Breast epithelium (tissue), 4 donors: ENCODE measurements at regions of chr13 and their contacts with region 1.

Region 1: DNA sequence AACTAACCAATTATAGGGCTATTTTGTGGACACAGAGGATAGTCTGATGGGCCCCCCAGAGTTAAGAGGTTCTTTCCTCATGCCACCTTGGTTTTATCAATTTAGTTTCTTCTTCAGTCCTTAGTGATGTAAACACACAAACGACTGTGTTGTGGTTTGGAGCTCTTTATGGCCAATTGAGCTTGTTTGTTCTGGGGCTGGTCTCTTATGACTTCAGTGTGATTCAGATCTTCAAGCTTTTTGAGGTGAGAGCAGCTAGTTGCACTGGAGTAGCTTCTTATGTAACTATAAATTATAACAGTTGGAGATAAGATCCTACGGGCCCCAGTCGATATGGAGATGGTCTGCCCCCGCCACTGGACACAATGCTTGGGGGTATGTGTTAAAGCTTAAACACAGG is 22.0 kb upstream of the GJB6 start:
- DNase-seq: no peak
- H3K4me3 ChIP-seq: no peak overlapping the region
- H3K27ac ChIP-seq: no peak overlapping the region
- H3K4me1 ChIP-seq: no peaks in the 10 kb centered on the region
- H3K27me3 ChIP-seq: peaks cover 0 to 8% of the 10 kb centered on the region in 2 donors
- CTCF ChIP-seq: no peak
- POLR2A ChIP-seq: no peak

Region 2: GRCh38 chr13:20274439-20274838 is 20.4 kb after region 1 on chr13:
- intact Hi-C with region 1: no loop called
- DNase-seq: peak in 1 of 2 donors; percentile 40
- H3K4me3 ChIP-seq: no peak overlapping the region
- H3K27ac ChIP-seq: no peak overlapping the region
- H3K4me1 ChIP-seq: no peaks in the 10 kb centered on the region
- H3K27me3 ChIP-seq: no peaks in the 10 kb centered on the region
- CTCF ChIP-seq: no peak
- POLR2A ChIP-seq: no peak

Region 3: GRCh38 chr13:20525690-20526544 is 271.8 kb after region 1 on chr13 and contains the start of gene CRYL1:
- intact Hi-C with region 1: no loop called
- DNase-seq: peak in 1 of 2 donors; percentile 46
- H3K4me3 ChIP-seq: peak within 1 kb of the TSS; percentile 81 to 88 (median 84)
- H3K27ac ChIP-seq: peak within 1 kb of the TSS; percentile 79 to 87
- H3K4me1 ChIP-seq: no peaks in the 10 kb centered on the region
- H3K27me3 ChIP-seq: no peaks in the 10 kb centered on the region
- CTCF ChIP-seq: no peak
- POLR2A ChIP-seq: no peak
- total RNA-seq, gene CRYL1: 27.5 to 68.3 (median 29.0) TPM

Region 4: GRCh38 chr13:20808874-20809273 is 554.8 kb after region 1 on chr13:
- intact Hi-C with region 1: loop called (anchors 5 kb)
- DNase-seq: no peak
- H3K4me3 ChIP-seq: no peak overlapping the region
- H3K27ac ChIP-seq: no peak overlapping the region
- H3K4me1 ChIP-seq: no peaks in the 10 kb centered on the region
- H3K27me3 ChIP-seq: no peaks in the 10 kb centered on the region
- CTCF ChIP-seq: no peak
- POLR2A ChIP-seq: no peak